Activated CD4-positive, alpha-beta memory T cell treated with anti-CD3 and anti-CD28 coated beads for 36 hours (primary cell): ENCODE measurements at regions of chr6 and their contacts with region 1.

Region 1: GRCh38 chr6:130132286-130132701 is 90.5 kb downstream of the SAMD3 start:
- DNase-seq: peak; percentile 79
- H3K4me3 Mint-ChIP-seq: peak overlapping the region; percentile 54
- H3K27ac Mint-ChIP-seq: peak overlapping the region; percentile 86
- H3K4me1 Mint-ChIP-seq: peaks cover 63% of the 10 kb centered on the region
- H3K27me3 Mint-ChIP-seq: no peaks in the 10 kb centered on the region

Region 2: GRCh38 chr6:129954749-129955431 is 177.4 kb before region 1 on chr6:
- CTCF ChIA-PET with region 1: no interaction called
- POLR2A ChIA-PET with region 1: no interaction called
- intact Hi-C with region 1: no loop called
- DNase-seq: no peak
- H3K4me3 Mint-ChIP-seq: no peak overlapping the region
- H3K27ac Mint-ChIP-seq: no peak overlapping the region
- H3K4me1 Mint-ChIP-seq: no peaks in the 10 kb centered on the region
- H3K27me3 Mint-ChIP-seq: no peaks in the 10 kb centered on the region

Region 3: GRCh38 chr6:130027948-130028347 is 104.3 kb before region 1 on chr6:
- CTCF ChIA-PET with region 1: no interaction called
- POLR2A ChIA-PET with region 1: no interaction called
- intact Hi-C with region 1: loop called (anchors 1 kb)
- DNase-seq: no peak
- H3K4me3 Mint-ChIP-seq: no peak overlapping the region
- H3K27ac Mint-ChIP-seq: peak overlapping the region; percentile 70
- H3K4me1 Mint-ChIP-seq: peaks cover 53% of the 10 kb centered on the region
- H3K27me3 Mint-ChIP-seq: no peaks in the 10 kb centered on the region

Region 4: DNA sequence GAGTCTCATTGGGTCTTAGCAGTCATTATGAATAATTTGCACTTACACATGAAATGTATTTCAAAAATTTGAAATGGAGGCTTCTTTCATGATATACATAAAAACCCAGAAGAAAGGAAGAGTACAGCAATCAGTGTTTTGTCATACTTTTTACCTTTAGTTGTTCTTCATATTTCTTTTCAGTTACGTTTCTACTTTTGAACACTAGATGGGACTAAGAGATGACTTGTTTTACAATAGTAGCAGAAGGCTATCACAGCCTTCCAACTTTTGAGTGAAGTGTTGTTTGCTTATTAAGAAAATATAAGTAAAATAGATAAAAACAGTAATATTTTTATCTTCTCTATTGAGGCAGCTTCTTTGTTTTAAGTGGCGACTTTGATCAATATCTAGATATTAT is 55.8 kb before region 1 on chr6:
- CTCF ChIA-PET with region 1: no interaction called
- POLR2A ChIA-PET with region 1: no interaction called
- intact Hi-C with region 1: loop called (anchors 5 kb)
- DNase-seq: no peak
- H3K4me3 Mint-ChIP-seq: no peak overlapping the region
- H3K27ac Mint-ChIP-seq: no peak overlapping the region
- H3K4me1 Mint-ChIP-seq: peaks cover 12% of the 10 kb centered on the region
- H3K27me3 Mint-ChIP-seq: no peaks in the 10 kb centered on the region

Region 5: GRCh38 chr6:130161683-130162404 is 29.6 kb after region 1 on chr6:
- CTCF ChIA-PET with region 1: no interaction called
- POLR2A ChIA-PET with region 1: no interaction called
- intact Hi-C with region 1: no loop called
- DNase-seq: no peak
- H3K4me3 Mint-ChIP-seq: no peak overlapping the region
- H3K27ac Mint-ChIP-seq: no peak overlapping the region
- H3K4me1 Mint-ChIP-seq: peaks cover 5% of the 10 kb centered on the region
- H3K27me3 Mint-ChIP-seq: no peaks in the 10 kb centered on the region

Region 6: DNA sequence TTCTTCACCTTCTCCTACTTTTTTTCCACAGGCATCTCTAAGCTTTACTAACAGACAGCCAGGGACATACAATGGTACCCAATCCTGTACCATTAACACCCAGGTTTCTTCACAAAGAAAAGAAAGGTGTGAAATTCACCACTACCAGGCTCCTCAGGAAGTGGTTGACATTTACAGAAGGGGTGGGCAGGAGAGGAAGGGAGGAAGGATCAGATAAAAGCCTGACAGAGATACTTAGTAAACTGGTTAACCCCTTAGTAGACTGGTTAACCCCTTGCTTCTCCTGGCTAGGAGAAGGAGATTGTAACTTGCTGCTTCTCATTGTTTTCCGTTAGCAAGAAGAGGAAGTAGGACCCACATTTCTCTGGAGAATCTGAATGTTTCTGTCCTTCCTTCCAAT is 83.2 kb after region 1 on chr6:
- CTCF ChIA-PET with region 1: no interaction called
- POLR2A ChIA-PET with region 1: interaction called, 3 read pairs
- intact Hi-C with region 1: loop called (anchors 2 kb)
- DNase-seq: peak; percentile 38
- H3K4me3 Mint-ChIP-seq: peak overlapping the region; percentile 61
- H3K27ac Mint-ChIP-seq: peak overlapping the region; percentile 69
- H3K4me1 Mint-ChIP-seq: peaks cover 60% of the 10 kb centered on the region
- H3K27me3 Mint-ChIP-seq: no peaks in the 10 kb centered on the region

Region 7: GRCh38 chr6:130282234-130282995 is 150.1 kb after region 1 on chr6:
- CTCF ChIA-PET with region 1: interaction called, 3 read pairs
- POLR2A ChIA-PET with region 1: no interaction called
- intact Hi-C with region 1: loop called (anchors 2 kb)
- DNase-seq: no peak
- H3K4me3 Mint-ChIP-seq: no peak overlapping the region
- H3K27ac Mint-ChIP-seq: no peak overlapping the region
- H3K4me1 Mint-ChIP-seq: peaks cover 4% of the 10 kb centered on the region
- H3K27me3 Mint-ChIP-seq: no peaks in the 10 kb centered on the region

Region 8: GRCh38 chr6:130625825-130626527 is 493.7 kb after region 1 on chr6:
- CTCF ChIA-PET with region 1: no interaction called
- POLR2A ChIA-PET with region 1: no interaction called
- intact Hi-C with region 1: loop called (anchors 10 kb)
- DNase-seq: peak; percentile 31
- H3K4me3 Mint-ChIP-seq: no peak overlapping the region
- H3K27ac Mint-ChIP-seq: no peak overlapping the region
- H3K4me1 Mint-ChIP-seq: peaks cover 22% of the 10 kb centered on the region
- H3K27me3 Mint-ChIP-seq: peaks cover 2% of the 10 kb centered on the region